ENCODE measurements at regions of chr2 and their contacts with region 1.

Region 1: GRCh38 chr2:70078384-70078783 is 8.9 kb upstream of the PCBP1 start:
- DNase-seq: no peak
- ATAC-seq: no peak
- H3K4me3 ChIP-seq: no peak overlapping the region
- H3K4me3 Mint-ChIP-seq: no peak overlapping the region
- H3K27ac ChIP-seq: no peak overlapping the region
- H3K27ac Mint-ChIP-seq: peak overlapping the region; percentile 29 to 48
- H3K4me1 ChIP-seq: peaks cover 6% of the 10 kb centered on the region
- H3K4me1 Mint-ChIP-seq: peaks cover 15 to 17% of the 10 kb centered on the region in 2 donors
- H3K27me3 ChIP-seq: no peaks in the 10 kb centered on the region
- H3K27me3 Mint-ChIP-seq: no peaks in the 10 kb centered on the region
- CTCF ChIP-seq: no peak

Region 2: GRCh38 chr2:69375494-69376353 is 702.7 kb before region 1 on chr2:
- intact Hi-C with region 1: no loop called
- DNase-seq: peak in 1 of 2 donors; percentile 60
- ATAC-seq: peak; percentile 55 to 70 (median 68)
- H3K4me3 ChIP-seq: no peak overlapping the region
- H3K4me3 Mint-ChIP-seq: no peak overlapping the region
- H3K27ac ChIP-seq: no peak overlapping the region
- H3K27ac Mint-ChIP-seq: peak overlapping the region; percentile 7 to 37
- H3K4me1 ChIP-seq: no peaks in the 10 kb centered on the region
- H3K4me1 Mint-ChIP-seq: peaks cover 9 to 17% of the 10 kb centered on the region in 2 donors
- H3K27me3 ChIP-seq: no peaks in the 10 kb centered on the region
- H3K27me3 Mint-ChIP-seq: no peaks in the 10 kb centered on the region
- CTCF ChIP-seq: peak; percentile 71

Region 3: DNA sequence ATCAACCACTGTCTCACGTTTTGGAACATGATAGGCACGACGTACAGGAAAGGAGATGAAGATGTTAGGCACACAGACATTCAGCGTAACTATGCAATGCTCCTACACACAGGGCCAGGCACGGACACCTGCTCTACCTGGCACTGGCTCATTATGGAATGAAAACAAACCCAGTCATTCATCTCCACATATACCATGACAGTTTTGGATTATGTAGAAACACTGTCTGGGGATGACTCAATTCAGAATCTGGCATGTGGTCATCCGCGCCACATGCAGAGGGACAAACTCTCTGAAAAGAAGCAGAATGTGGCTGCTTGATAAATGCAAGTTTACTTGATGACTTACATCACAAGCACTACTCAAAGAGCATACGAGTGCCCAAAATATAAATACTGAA is 611.7 kb before region 1 on chr2:
- intact Hi-C with region 1: no loop called
- DNase-seq: no peak
- ATAC-seq: no peak
- H3K4me3 ChIP-seq: no peak overlapping the region
- H3K4me3 Mint-ChIP-seq: no peak overlapping the region
- H3K27ac ChIP-seq: no peak overlapping the region
- H3K27ac Mint-ChIP-seq: peak overlapping the region; percentile 56 to 79
- H3K4me1 ChIP-seq: no peaks in the 10 kb centered on the region
- H3K4me1 Mint-ChIP-seq: peaks cover 30 to 44% of the 10 kb centered on the region in 2 donors
- H3K27me3 ChIP-seq: no peaks in the 10 kb centered on the region
- H3K27me3 Mint-ChIP-seq: no peaks in the 10 kb centered on the region
- CTCF ChIP-seq: no peak

Region 4: DNA sequence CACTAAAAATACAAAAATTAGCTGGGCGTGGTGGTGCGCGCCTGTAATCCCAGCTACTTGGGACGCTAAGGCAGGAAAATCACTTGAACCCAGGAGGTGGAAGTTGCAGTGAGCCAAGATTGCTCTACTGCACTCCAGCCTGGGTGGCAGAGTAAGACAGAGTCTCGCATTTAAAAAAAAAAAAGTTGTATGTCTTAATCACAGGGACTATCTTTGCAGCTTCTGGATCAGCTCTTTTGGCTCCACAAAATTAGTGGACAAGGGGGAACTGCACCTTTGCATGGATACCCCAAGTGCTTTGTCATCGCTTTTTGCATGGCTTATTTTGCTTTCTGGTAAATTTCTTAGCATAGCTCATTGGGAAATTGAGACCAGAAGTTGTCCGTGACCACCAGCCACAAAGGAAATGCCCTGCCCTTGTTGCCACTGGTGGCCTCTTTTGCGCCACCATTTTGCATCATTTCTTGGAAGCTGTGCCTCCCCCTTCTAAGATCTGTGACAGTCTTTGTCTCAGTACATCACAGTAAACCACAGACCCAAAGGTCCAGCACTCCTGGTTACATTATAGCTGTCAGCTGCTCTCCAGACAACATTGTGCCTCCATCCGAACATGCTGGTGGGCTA is 35.0 kb before region 1 on chr2:
- intact Hi-C with region 1: loop called (anchors 5 kb)
- DNase-seq: peak; percentile 28 to 34
- ATAC-seq: peak; percentile 61 to 91 (median 83)
- H3K4me3 ChIP-seq: no peak overlapping the region
- H3K4me3 Mint-ChIP-seq: peak overlapping the region; percentile 78
- H3K27ac ChIP-seq: peak overlapping the region; percentile 85
- H3K27ac Mint-ChIP-seq: peak overlapping the region; percentile 92 to 97
- H3K4me1 ChIP-seq: peaks cover 64% of the 10 kb centered on the region
- H3K4me1 Mint-ChIP-seq: peaks cover 72 to 78% of the 10 kb centered on the region in 2 donors
- H3K27me3 ChIP-seq: no peaks in the 10 kb centered on the region
- H3K27me3 Mint-ChIP-seq: no peaks in the 10 kb centered on the region
- CTCF ChIP-seq: no peak

Region 5: GRCh38 chr2:70381831-70382267 is 303.5 kb after region 1 on chr2:
- intact Hi-C with region 1: no loop called
- DNase-seq: no peak
- ATAC-seq: no peak
- H3K4me3 ChIP-seq: no peak overlapping the region
- H3K4me3 Mint-ChIP-seq: no peak overlapping the region
- H3K27ac ChIP-seq: no peak overlapping the region
- H3K27ac Mint-ChIP-seq: no peak overlapping the region
- H3K4me1 ChIP-seq: no peaks in the 10 kb centered on the region
- H3K4me1 Mint-ChIP-seq: peaks cover 0 to 6% of the 10 kb centered on the region in 2 donors
- H3K27me3 ChIP-seq: no peaks in the 10 kb centered on the region
- H3K27me3 Mint-ChIP-seq: peaks cover 6 to 14% of the 10 kb centered on the region in 2 donors
- CTCF ChIP-seq: no peak